Activated naive CD4-positive, alpha-beta T cell treated with anti-CD3 and anti-CD28 coated beads, Interleukin-2, amount 10 ng/mL, durations not matched to agents 7 days and 5 days (primary cell): ENCODE measurements at regions of chr4 and their contacts with region 1.

Region 1: DNA sequence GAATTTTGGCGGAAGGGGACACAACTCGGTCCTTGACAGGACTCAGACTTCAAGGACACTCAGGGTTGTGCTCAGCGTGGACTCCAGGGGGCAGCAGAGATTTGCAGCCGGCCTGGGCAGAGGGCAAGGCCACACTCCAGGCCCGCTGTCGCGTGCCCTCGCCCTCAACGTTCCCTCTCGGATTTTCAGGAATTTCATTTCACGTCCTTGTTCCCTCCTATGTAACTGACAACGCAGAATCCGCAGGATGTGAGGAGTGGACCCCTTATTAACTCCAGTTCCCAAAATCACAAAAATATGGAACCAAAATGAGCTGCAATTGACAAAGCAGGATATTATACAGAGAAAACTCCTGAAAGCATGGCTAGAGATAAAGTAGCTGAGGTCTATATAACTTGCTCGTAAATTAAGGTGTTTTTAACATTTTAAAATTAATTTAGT is 21.0 kb upstream of the DCTD start:
- DNase-seq: peak; percentile 73
- H3K4me3 Mint-ChIP-seq: no peak overlapping the region
- H3K27ac Mint-ChIP-seq: no peak overlapping the region
- H3K4me1 Mint-ChIP-seq: no peaks in the 10 kb centered on the region
- H3K27me3 Mint-ChIP-seq: peaks cover 26% of the 10 kb centered on the region

Region 2: GRCh38 chr4:182738283-182739047 is 199.8 kb before region 1 on chr4:
- CTCF ChIA-PET with region 1: no interaction called
- DNase-seq: no peak
- H3K4me3 Mint-ChIP-seq: no peak overlapping the region
- H3K27ac Mint-ChIP-seq: no peak overlapping the region
- H3K4me1 Mint-ChIP-seq: no peaks in the 10 kb centered on the region
- H3K27me3 Mint-ChIP-seq: no peaks in the 10 kb centered on the region

Region 3: GRCh38 chr4:182925298-182925738 is 12.9 kb before region 1 on chr4:
- CTCF ChIA-PET with region 1: interaction called, 19 read pairs
- DNase-seq: peak; percentile 73
- H3K4me3 Mint-ChIP-seq: no peak overlapping the region
- H3K27ac Mint-ChIP-seq: no peak overlapping the region
- H3K4me1 Mint-ChIP-seq: no peaks in the 10 kb centered on the region
- H3K27me3 Mint-ChIP-seq: peaks cover 28% of the 10 kb centered on the region

Region 4: GRCh38 chr4:182968917-182969650 is 30.9 kb after region 1 on chr4:
- CTCF ChIA-PET with region 1: no interaction called
- DNase-seq: no peak
- H3K4me3 Mint-ChIP-seq: no peak overlapping the region
- H3K27ac Mint-ChIP-seq: no peak overlapping the region
- H3K4me1 Mint-ChIP-seq: no peaks in the 10 kb centered on the region
- H3K27me3 Mint-ChIP-seq: peaks cover 23% of the 10 kb centered on the region

Region 5: DNA sequence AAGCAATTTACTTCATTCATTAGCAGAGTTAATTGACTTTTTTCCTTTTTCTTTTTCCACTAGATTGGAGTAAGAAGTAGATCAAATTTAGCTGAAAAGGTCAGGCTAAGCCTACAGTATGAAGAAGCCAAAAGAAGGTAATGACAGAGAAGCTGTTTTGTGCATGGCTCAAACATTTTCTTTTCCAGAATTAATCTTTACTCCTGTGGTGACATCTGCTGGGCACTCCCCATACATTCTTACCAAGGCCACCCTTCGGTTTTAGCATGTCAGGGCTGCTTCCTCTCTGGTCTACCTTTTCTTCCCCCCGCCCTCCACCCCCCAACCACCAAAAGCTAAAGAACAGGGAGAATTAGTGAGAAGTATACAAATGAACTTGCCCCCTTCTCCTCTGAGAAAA is 311.6 kb after region 1 on chr4:
- CTCF ChIA-PET with region 1: interaction called, 41 read pairs
- DNase-seq: peak; percentile 34
- H3K4me3 Mint-ChIP-seq: no peak overlapping the region
- H3K27ac Mint-ChIP-seq: no peak overlapping the region
- H3K4me1 Mint-ChIP-seq: no peaks in the 10 kb centered on the region
- H3K27me3 Mint-ChIP-seq: no peaks in the 10 kb centered on the region

Region 6: DNA sequence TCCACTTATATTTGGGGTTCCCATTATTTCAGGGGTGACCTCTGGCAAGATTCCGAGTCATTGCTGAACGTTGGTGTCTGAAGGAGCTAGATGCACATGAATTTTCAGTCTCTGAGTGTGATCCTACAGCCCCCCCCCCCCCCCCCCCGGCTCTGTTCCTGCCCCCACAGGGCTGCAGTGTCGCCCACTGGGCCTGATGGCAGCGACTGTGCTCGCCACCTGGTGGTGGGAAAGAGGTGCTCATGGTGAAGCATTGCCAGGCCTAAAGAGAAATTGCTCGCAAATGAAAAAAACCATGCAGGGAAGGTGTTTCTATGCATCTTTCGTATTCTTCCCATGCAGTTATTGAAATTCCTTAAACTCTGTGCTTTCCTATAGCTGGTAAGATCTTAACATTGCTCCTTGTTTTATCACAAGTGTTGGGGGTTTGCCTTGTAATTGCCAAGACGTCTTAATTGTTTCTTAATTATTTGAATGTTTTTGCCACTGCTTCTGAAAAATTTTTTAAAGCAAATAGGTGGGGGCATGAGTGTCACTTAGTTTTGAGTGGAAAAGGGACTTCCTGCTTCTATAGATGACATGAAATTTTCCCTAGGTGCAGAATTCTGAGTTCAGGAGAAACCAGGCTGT is 318.6 kb after region 1 on chr4:
- CTCF ChIA-PET with region 1: interaction called, 41 read pairs
- DNase-seq: peak; percentile 58
- H3K4me3 Mint-ChIP-seq: no peak overlapping the region
- H3K27ac Mint-ChIP-seq: no peak overlapping the region
- H3K4me1 Mint-ChIP-seq: no peaks in the 10 kb centered on the region
- H3K27me3 Mint-ChIP-seq: no peaks in the 10 kb centered on the region